Ascending aorta (tissue), 2 donors: ENCODE measurements at regions of chr4 and their contacts with region 1.

Region 1: GRCh38 chr4:99462875-99463464 is 27.8 kb upstream of the ADH7 start:
- DNase-seq: peak in 1 of 2 donors; percentile 74
- H3K4me3 ChIP-seq: no peak overlapping the region
- H3K27ac ChIP-seq: no peak overlapping the region
- H3K4me1 ChIP-seq: no peaks in the 10 kb centered on the region
- H3K27me3 ChIP-seq: no peaks in the 10 kb centered on the region
- CTCF ChIP-seq: peak; percentile 73 to 85 (median 80)

Region 2: GRCh38 chr4:98467627-98468072 is 995.3 kb before region 1 on chr4:
- intact Hi-C with region 1: loop called (anchors 5 kb)
- DNase-seq: peak; percentile 17 to 84
- H3K4me3 ChIP-seq: peak overlapping the region; percentile 42 to 61
- H3K27ac ChIP-seq: no peak overlapping the region
- H3K4me1 ChIP-seq: no peaks in the 10 kb centered on the region
- H3K27me3 ChIP-seq: no peaks in the 10 kb centered on the region
- CTCF ChIP-seq: peak; percentile 61 to 82 (median 79)

Region 3: GRCh38 chr4:98939892-98940298 is 523.1 kb before region 1 on chr4:
- intact Hi-C with region 1: loop called (anchors 5 kb)
- DNase-seq: no peak
- H3K4me3 ChIP-seq: no peak overlapping the region
- H3K27ac ChIP-seq: peak overlapping the region in 1 of 2 donors; percentile 73
- H3K4me1 ChIP-seq: peaks cover 0 to 6% of the 10 kb centered on the region in 2 donors
- H3K27me3 ChIP-seq: no peaks in the 10 kb centered on the region
- CTCF ChIP-seq: peak; percentile 45 to 66 (median 54)

Region 4: GRCh38 chr4:98995183-98996055 is 467.6 kb before region 1 on chr4 and contains the start of gene METAP1:
- intact Hi-C with region 1: loop called (anchors 5 kb)
- DNase-seq: peak; percentile 82 to 96
- H3K4me3 ChIP-seq: peak within 1 kb of the TSS; percentile 91
- H3K27ac ChIP-seq: peak within 1 kb of the TSS; percentile 81 to 91
- H3K4me1 ChIP-seq: peaks cover 0 to 7% of the 10 kb centered on the region in 2 donors
- H3K27me3 ChIP-seq: no peaks in the 10 kb centered on the region
- CTCF ChIP-seq: peak; percentile 39 to 64 (median 58)
- total RNA-seq, gene METAP1: 53.2 TPM

Region 5: GRCh38 chr4:99061048-99061700 is 401.8 kb before region 1 on chr4:
- intact Hi-C with region 1: loop called (anchors 5 kb)
- DNase-seq: no peak
- H3K4me3 ChIP-seq: no peak overlapping the region
- H3K27ac ChIP-seq: peak overlapping the region; percentile 32 to 47
- H3K4me1 ChIP-seq: peaks cover 0 to 7% of the 10 kb centered on the region in 2 donors
- H3K27me3 ChIP-seq: no peaks in the 10 kb centered on the region
- CTCF ChIP-seq: no peak

Region 6: DNA sequence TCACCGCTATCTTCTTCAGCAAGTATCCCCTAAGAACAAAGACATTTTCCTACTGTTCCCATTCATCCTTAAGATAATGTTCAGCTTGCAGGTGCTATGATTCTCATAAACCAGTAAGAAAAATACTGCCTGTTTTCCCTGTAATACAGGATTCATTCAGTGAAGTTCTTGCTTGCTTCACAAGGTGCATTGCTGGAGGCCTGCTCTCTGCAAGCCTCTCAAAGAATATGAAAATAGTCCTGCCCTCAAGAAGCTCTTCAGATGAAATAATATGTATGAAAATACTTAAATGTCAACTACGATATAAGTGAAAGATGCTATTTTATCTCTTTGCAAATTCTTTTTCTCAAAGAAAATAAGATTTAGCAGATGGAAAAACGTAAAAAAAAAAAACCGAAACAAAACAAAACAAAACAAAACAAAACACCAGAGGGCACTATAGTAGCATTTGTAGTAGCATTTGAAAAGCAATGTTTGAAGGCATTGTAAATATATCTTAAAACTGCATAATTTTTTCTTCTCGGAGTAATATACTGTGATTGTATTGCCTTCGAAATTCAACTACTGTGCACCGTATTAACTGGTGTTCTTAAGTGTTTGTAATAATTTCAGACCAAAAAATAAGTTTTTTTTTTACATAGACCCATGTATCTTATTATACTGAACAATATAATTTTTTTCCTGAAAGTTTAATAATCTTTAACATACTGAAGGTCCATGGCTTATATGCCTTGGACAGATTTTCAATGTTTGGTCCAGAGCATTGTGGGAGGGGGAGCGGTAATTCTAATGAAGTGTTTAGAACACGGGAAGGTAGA is 344.9 kb before region 1 on chr4:
- intact Hi-C with region 1: loop called (anchors 1 kb)
- DNase-seq: no peak
- H3K4me3 ChIP-seq: no peak overlapping the region
- H3K27ac ChIP-seq: no peak overlapping the region
- H3K4me1 ChIP-seq: peaks cover 0 to 3% of the 10 kb centered on the region in 2 donors
- H3K27me3 ChIP-seq: no peaks in the 10 kb centered on the region
- CTCF ChIP-seq: peak in 1 of 3 experiments; percentile 41

Region 7: DNA sequence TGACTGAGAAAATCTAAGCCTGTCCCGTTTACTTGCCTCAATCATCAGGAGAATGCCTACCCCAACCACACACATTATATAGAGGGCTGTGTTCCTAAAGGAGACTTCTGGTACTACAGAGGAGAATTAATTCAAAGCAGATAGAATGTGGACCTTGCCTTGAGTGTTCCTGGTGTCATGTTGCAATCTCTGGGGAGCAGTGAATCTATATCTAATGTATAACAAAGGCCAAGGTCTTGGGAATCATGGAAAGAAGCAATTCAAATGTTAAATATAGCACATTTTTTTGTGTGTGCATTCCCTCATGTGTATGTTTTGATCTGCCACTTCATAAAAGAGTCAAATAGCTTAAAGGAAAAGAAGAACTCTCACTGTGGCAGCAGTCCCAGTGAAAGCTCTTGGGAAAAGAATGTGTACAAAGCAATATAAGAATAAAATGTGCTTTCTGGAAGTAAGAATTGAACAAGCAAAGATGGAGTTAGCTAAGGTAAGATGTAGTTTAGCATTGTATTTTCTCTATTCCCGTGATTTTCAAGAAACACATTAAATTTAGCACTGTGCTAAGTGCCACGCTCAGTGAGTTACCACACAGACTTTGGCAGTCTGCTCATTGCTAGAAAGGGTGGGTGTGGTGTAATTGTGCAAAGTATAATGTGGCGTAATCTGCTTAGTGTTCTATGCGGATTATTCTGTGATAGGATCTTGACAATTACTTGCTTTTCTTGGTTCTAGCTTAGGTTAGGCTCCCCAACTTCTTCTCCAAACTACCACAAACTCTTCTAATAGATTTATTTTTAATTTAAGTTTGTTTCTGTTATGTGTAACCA is 257.6 kb before region 1 on chr4:
- intact Hi-C with region 1: loop called (anchors 2 kb)
- DNase-seq: peak in 1 of 2 donors; percentile 77
- H3K4me3 ChIP-seq: no peak overlapping the region
- H3K27ac ChIP-seq: peak overlapping the region; percentile 75 to 85
- H3K4me1 ChIP-seq: peaks cover 9 to 40% of the 10 kb centered on the region in 2 donors
- H3K27me3 ChIP-seq: no peaks in the 10 kb centered on the region
- CTCF ChIP-seq: no peak